ENCODE measurements at regions of chr22 and their contacts with region 1.

Region 1: DNA sequence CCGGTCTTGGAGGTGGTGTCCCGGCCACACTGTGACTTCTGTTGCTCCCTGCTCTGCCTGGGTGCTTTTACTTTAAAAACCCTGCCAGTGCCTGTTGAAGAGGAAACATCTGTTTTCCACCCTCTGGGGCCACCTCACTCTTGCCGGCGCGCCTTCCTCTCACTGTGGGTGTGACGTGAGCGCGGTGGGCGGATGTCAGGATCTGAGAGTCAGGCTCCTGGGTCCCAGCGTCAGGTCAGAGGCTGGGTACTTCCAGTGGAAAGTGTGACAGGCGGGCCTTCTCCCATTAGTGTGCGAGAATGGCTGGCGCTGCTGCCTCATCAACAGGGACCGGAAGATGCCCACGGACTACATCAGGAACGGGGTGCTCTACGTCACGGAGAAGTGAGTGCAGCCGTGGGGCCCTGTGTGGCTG is 54.2 kb downstream of the GRAMD4 start:
- DNase-seq: peak; percentile 82 to 98 (median 83)
- H3K4me3 ChIP-seq: peak overlapping the region; percentile 61 to 73
- H3K4me3 Mint-ChIP-seq: peak overlapping the region; percentile 90 to 99 (median 94)
- H3K27ac ChIP-seq: peak overlapping the region; percentile 75
- H3K27ac Mint-ChIP-seq: peak overlapping the region; percentile 93 to 99 (median 98)
- H3K4me1 ChIP-seq: peaks cover 27% of the 10 kb centered on the region
- H3K4me1 Mint-ChIP-seq: peaks cover 8 to 44% (median 19%) of the 10 kb centered on the region in 4 donors
- H3K27me3 ChIP-seq: no peaks in the 10 kb centered on the region
- H3K27me3 Mint-ChIP-seq: no peaks in the 10 kb centered on the region

Region 2: GRCh38 chr22:46576556-46577367 is 97.6 kb before region 1 on chr22:
- CTCF ChIA-PET with region 1: no interaction called
- POLR2A ChIA-PET with region 1: no interaction called
- intact Hi-C with region 1: loop called (anchors 5 kb)
- DNase-seq: peak in 4 of 5 donors; percentile 64 to 76 (median 72)
- H3K4me3 ChIP-seq: peak overlapping the region; percentile 44 to 52
- H3K4me3 Mint-ChIP-seq: peak overlapping the region; percentile 79 to 91 (median 83)
- H3K27ac ChIP-seq: peak overlapping the region; percentile 35
- H3K27ac Mint-ChIP-seq: peak overlapping the region; percentile 55 to 86 (median 83)
- H3K4me1 ChIP-seq: peaks cover 26% of the 10 kb centered on the region
- H3K4me1 Mint-ChIP-seq: peaks cover 13 to 54% (median 36%) of the 10 kb centered on the region in 4 donors
- H3K27me3 ChIP-seq: no peaks in the 10 kb centered on the region
- H3K27me3 Mint-ChIP-seq: no peaks in the 10 kb centered on the region